Tibial artery (tissue), 4 donors: ENCODE measurements at regions of chr7 and their contacts with region 1.

Region 1: GRCh38 chr7:76020031-76020714 is 25.8 kb upstream of the TMEM120A start:
- DNase-seq: peak; percentile 69 to 85
- H3K4me3 ChIP-seq: no peak overlapping the region
- H3K27ac ChIP-seq: no peak overlapping the region
- H3K4me1 ChIP-seq: no peaks in the 10 kb centered on the region
- H3K27me3 ChIP-seq: no peaks in the 10 kb centered on the region
- CTCF ChIP-seq: peak; percentile 84 to 94

Region 2: GRCh38 chr7:75642810-75643486 is 377.2 kb before region 1 on chr7:
- intact Hi-C with region 1: no loop called
- DNase-seq: peak in 1 of 2 donors; percentile 45
- H3K4me3 ChIP-seq: no peak overlapping the region
- H3K27ac ChIP-seq: no peak overlapping the region
- H3K4me1 ChIP-seq: peaks cover 0 to 24% (median 15%) of the 10 kb centered on the region in 4 donors
- H3K27me3 ChIP-seq: no peaks in the 10 kb centered on the region
- CTCF ChIP-seq: peak; percentile 54 to 59

Region 3: GRCh38 chr7:75866489-75867389 is 153.4 kb before region 1 on chr7:
- intact Hi-C with region 1: loop called (anchors 2 kb)
- DNase-seq: peak; percentile 59 to 74
- H3K4me3 ChIP-seq: no peak overlapping the region
- H3K27ac ChIP-seq: no peak overlapping the region
- H3K4me1 ChIP-seq: peaks cover 0 to 7% (median 5%) of the 10 kb centered on the region in 4 donors
- H3K27me3 ChIP-seq: peaks cover 0 to 8% of the 10 kb centered on the region in 2 donors
- CTCF ChIP-seq: peak; percentile 89 to 94